PC-3 (cell line): ENCODE measurements at regions of chr1 and their contacts with region 1.

Region 1: GRCh38 chr1:203504397-203505250 is 10.7 kb downstream of the OPTC start:
- DNase-seq: peak; percentile 94
- ATAC-seq: peak; percentile 91
- H3K4me3 ChIP-seq: peak overlapping the region; percentile 14; the same call in 1 of the 2 replicates
- H3K27ac ChIP-seq: no peak overlapping the region
- H3K4me1 ChIP-seq: peaks cover 20% of the 10 kb centered on the region; the same call in 1 of the 2 replicates
- H3K27me3 ChIP-seq: no peaks in the 10 kb centered on the region
- CTCF ChIP-seq: peak; percentile 96

Region 2: GRCh38 chr1:203101915-203102634 is 402.5 kb before region 1 on chr1:
- CTCF ChIA-PET with region 1: no interaction called
- POLR2A ChIA-PET with region 1: no interaction called
- intact Hi-C with region 1: no loop called
- DNase-seq: no peak
- ATAC-seq: no peak
- H3K4me3 ChIP-seq: no peak overlapping the region
- H3K27ac ChIP-seq: no peak overlapping the region
- H3K4me1 ChIP-seq: no peaks in the 10 kb centered on the region
- H3K27me3 ChIP-seq: peaks cover 30% of the 10 kb centered on the region
- CTCF ChIP-seq: no peak

Region 3: GRCh38 chr1:203607533-203607873 is 102.9 kb after region 1 on chr1:
- CTCF ChIA-PET with region 1: interaction called, 6 read pairs
- POLR2A ChIA-PET with region 1: no interaction called
- intact Hi-C with region 1: loop called (anchors 2 kb)
- DNase-seq: no peak
- ATAC-seq: no peak
- H3K4me3 ChIP-seq: no peak overlapping the region
- H3K27ac ChIP-seq: peak overlapping the region; percentile 61
- H3K4me1 ChIP-seq: peaks cover 19% of the 10 kb centered on the region
- H3K27me3 ChIP-seq: no peaks in the 10 kb centered on the region
- CTCF ChIP-seq: no peak

Region 4: GRCh38 chr1:203702130-203702577 is 197.5 kb after region 1 on chr1:
- CTCF ChIA-PET with region 1: interaction called, 22 read pairs
- POLR2A ChIA-PET with region 1: no interaction called
- intact Hi-C with region 1: loop called (anchors 1 kb)
- DNase-seq: peak; percentile 82
- ATAC-seq: peak; percentile 91
- H3K4me3 ChIP-seq: no peak overlapping the region
- H3K27ac ChIP-seq: no peak overlapping the region
- H3K4me1 ChIP-seq: no peaks in the 10 kb centered on the region
- H3K27me3 ChIP-seq: no peaks in the 10 kb centered on the region
- CTCF ChIP-seq: peak; percentile 100